Caco-2 (cell line): ENCODE measurements at regions of chr10 and their contacts with region 1.

Region 1: GRCh38 chr10:103966671-103967447 is at the start of gene SLK:
- DNase-seq: peak; percentile 76 to 89
- H3K4me3 ChIP-seq: peak within 1 kb of the TSS; percentile 95
- H3K4me3 Mint-ChIP-seq: peak within 1 kb of the TSS; percentile 86
- H3K27ac Mint-ChIP-seq: peak within 1 kb of the TSS; percentile 88
- H3K4me1 ChIP-seq: peaks cover 8% of the 10 kb centered on the region
- H3K4me1 Mint-ChIP-seq: peaks cover 9% of the 10 kb centered on the region
- H3K27me3 ChIP-seq: no peaks in the 10 kb centered on the region
- H3K27me3 Mint-ChIP-seq: no peaks in the 10 kb centered on the region
- CTCF ChIP-seq: no peak
- total RNA-seq, gene SLK: 35.6 and 39.5 TPM in 2 replicates

Region 2: DNA sequence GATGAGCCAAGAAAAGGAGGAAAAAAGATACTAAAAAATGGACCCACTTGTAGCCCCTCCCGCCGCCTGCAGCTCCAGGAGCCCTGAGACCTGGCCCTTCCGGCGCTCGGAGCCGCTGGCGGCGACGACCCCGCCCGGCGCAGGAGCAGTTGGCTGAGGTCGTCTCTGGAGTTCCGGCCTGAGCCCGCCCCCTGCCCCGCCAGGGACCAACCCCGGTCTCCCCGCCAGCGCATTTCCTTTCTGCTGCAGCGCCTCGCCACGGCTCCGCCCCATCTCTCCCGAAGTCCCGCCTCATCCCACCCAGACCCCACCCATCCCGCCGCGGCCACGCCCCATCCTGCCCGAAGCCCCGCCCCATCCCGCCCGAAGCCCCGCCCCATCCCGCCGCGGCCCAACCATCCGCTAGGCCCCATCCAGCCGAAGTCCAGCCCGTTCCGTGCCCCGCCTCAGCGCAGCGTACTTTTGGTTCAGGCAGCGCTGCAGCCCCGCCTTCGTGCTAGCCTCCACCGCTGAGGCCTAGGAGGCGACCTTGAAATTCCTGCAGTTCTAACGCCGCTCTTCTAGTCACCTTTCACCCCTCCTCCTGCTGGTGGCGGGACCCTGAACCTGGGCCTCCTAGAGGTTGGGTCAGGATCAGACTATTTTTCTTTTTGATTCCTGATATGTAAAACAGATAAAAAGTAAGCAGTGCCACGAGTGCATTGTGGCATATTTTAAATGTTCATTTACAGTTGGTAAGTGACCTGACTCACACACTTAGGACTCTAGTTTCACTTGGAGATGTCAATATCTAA is 48.6 kb before region 1 on chr10 and contains the start of gene STN1:
- CTCF ChIA-PET with region 1: no interaction called
- POLR2A ChIA-PET with region 1: no interaction called
- intact Hi-C with region 1: loop called (anchors 2 kb)
- DNase-seq: peak; percentile 98
- H3K4me3 ChIP-seq: peak within 1 kb of the TSS; percentile 64
- H3K4me3 Mint-ChIP-seq: peak within 1 kb of the TSS; percentile 95
- H3K27ac Mint-ChIP-seq: peak within 1 kb of the TSS; percentile 94
- H3K4me1 ChIP-seq: peaks cover 21% of the 10 kb centered on the region
- H3K4me1 Mint-ChIP-seq: no peaks in the 10 kb centered on the region
- H3K27me3 ChIP-seq: no peaks in the 10 kb centered on the region
- H3K27me3 Mint-ChIP-seq: no peaks in the 10 kb centered on the region
- CTCF ChIP-seq: peak in 1 of 2 experiments; percentile 44
- total RNA-seq, gene STN1: 15.9 and 16.1 TPM in 2 replicates

Region 3: GRCh38 chr10:103926722-103927319 is 40.0 kb before region 1 on chr10:
- CTCF ChIA-PET with region 1: no interaction called
- POLR2A ChIA-PET with region 1: interaction called, 5 read pairs
- intact Hi-C with region 1: loop called (anchors 2 kb)
- DNase-seq: no peak
- H3K4me3 ChIP-seq: no peak overlapping the region
- H3K4me3 Mint-ChIP-seq: peak overlapping the region; percentile 37
- H3K27ac Mint-ChIP-seq: peak overlapping the region; percentile 59
- H3K4me1 ChIP-seq: peaks cover 78% of the 10 kb centered on the region
- H3K4me1 Mint-ChIP-seq: peaks cover 44% of the 10 kb centered on the region
- H3K27me3 ChIP-seq: no peaks in the 10 kb centered on the region
- H3K27me3 Mint-ChIP-seq: no peaks in the 10 kb centered on the region
- CTCF ChIP-seq: peak in 1 of 2 experiments; percentile 25